ENCODE measurements at regions of chr16 and their contacts with region 1.

Region 1: GRCh38 chr16:66947302-66948065 is 12.2 kb downstream of the CES2 start:
- DNase-seq: peak; percentile 64 to 86 (median 80)
- ATAC-seq: peak; percentile 97
- H3K4me3 ChIP-seq: peak overlapping the region; percentile 45
- H3K4me3 Mint-ChIP-seq: peak overlapping the region; percentile 83 to 95 (median 92)
- H3K27ac ChIP-seq: peak overlapping the region; percentile 26
- H3K27ac Mint-ChIP-seq: peak overlapping the region in 3 of 9 donors; percentile 13 to 50 (median 29)
- H3K4me1 ChIP-seq: peaks cover 0 to 4% of the 10 kb centered on the region in 2 donors
- H3K4me1 Mint-ChIP-seq: peaks cover 13 to 24% (median 18%) of the 10 kb centered on the region in 7 donors
- H3K27me3 ChIP-seq: no peaks in the 10 kb centered on the region
- H3K27me3 Mint-ChIP-seq: peaks cover 23 to 39% (median 32%) of the 10 kb centered on the region in 5 donors

Region 2: GRCh38 chr16:66844342-66845079 is 103.0 kb before region 1 on chr16 and contains the start of gene CA7:
- CTCF ChIA-PET with region 1: no interaction called
- POLR2A ChIA-PET with region 1: no interaction called
- intact Hi-C with region 1: no loop called
- DNase-seq: no peak
- ATAC-seq: peak; percentile 24
- H3K4me3 ChIP-seq: no peak within 1 kb of the TSS
- H3K4me3 Mint-ChIP-seq: peak within 1 kb of the TSS; percentile 36 to 82 (median 68)
- H3K27ac ChIP-seq: no peak within 1 kb of the TSS
- H3K27ac Mint-ChIP-seq: peak within 1 kb of the TSS in 2 of 9 donors; percentile 45 to 76
- H3K4me1 ChIP-seq: peaks cover 0 to 4% of the 10 kb centered on the region in 2 donors
- H3K4me1 Mint-ChIP-seq: peaks cover 0 to 21% (median 5%) of the 10 kb centered on the region in 7 donors
- H3K27me3 ChIP-seq: no peaks in the 10 kb centered on the region
- H3K27me3 Mint-ChIP-seq: peaks cover 35 to 53% (median 38%) of the 10 kb centered on the region in 5 donors
- total RNA-seq, gene CA7: not detected

Region 3: GRCh38 chr16:66894948-66895688 is 52.4 kb before region 1 on chr16:
- CTCF ChIA-PET with region 1: no interaction called
- POLR2A ChIA-PET with region 1: no interaction called
- intact Hi-C with region 1: loop called in 1 of 2 experiments (anchors 5 kb)
- DNase-seq: peak; percentile 22 to 63 (median 51)
- ATAC-seq: peak; percentile 90
- H3K4me3 ChIP-seq: no peak overlapping the region
- H3K4me3 Mint-ChIP-seq: no peak overlapping the region
- H3K27ac ChIP-seq: no peak overlapping the region
- H3K27ac Mint-ChIP-seq: peak overlapping the region in 1 of 9 donors; percentile 71
- H3K4me1 ChIP-seq: peaks cover 0 to 3% of the 10 kb centered on the region in 2 donors
- H3K4me1 Mint-ChIP-seq: peaks cover 0 to 28% (median 12%) of the 10 kb centered on the region in 7 donors
- H3K27me3 ChIP-seq: no peaks in the 10 kb centered on the region
- H3K27me3 Mint-ChIP-seq: no peaks in the 10 kb centered on the region

Region 4: DNA sequence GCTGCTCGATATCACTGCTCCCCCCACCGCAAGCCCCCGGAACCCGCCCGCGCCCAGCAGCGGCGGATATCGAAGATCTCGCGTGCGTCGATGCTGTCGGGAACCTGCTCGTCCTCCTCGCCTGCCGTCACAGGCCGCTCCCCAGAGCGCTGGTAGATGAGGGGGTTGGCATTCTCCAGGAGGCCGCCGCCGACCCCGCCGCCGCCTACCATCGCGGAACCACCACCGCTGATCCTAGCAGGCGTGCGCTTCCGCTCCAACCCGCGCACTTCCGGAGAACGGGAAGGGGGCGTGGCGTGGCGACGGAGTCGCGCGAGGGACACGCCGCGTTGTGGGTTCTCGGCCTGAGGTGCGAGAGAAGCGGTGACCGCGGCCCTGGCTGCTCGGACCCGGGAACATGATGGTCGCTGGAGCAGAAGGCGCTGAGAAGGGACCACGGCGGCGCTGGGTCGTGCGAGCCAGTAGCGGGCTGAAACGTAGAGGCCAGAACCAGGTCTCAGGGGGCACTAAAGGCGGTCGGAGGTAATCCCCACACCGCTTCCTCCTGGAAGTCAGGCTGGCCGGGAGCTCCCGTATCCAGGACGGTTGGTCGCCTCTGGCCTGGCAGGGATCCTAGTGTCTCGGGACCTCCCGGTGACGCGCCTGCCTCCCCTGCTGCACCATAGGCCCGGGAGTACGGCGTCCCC is 13.2 kb before region 1 on chr16 and contains the start of gene CIAO2B:
- CTCF ChIA-PET with region 1: interaction called, 3 read pairs
- POLR2A ChIA-PET with region 1: interaction called, 3 read pairs
- intact Hi-C with region 1: loop called in 1 of 2 experiments (anchors 1 kb)
- DNase-seq: peak; percentile 86 to 95 (median 91)
- ATAC-seq: peak; percentile 93
- H3K4me3 ChIP-seq: peak within 1 kb of the TSS; percentile 96
- H3K4me3 Mint-ChIP-seq: peak within 1 kb of the TSS; percentile 91 to 99 (median 98)
- H3K27ac ChIP-seq: peak within 1 kb of the TSS; percentile 97
- H3K27ac Mint-ChIP-seq: peak within 1 kb of the TSS; percentile 96 to 99 (median 98)
- H3K4me1 ChIP-seq: peaks cover 24 to 35% of the 10 kb centered on the region in 2 donors
- H3K4me1 Mint-ChIP-seq: peaks cover 38 to 63% (median 54%) of the 10 kb centered on the region in 7 donors
- H3K27me3 ChIP-seq: no peaks in the 10 kb centered on the region
- H3K27me3 Mint-ChIP-seq: no peaks in the 10 kb centered on the region
- total RNA-seq, gene CIAO2B: 47.0 to 116 (median 58.5) TPM

Region 5: DNA sequence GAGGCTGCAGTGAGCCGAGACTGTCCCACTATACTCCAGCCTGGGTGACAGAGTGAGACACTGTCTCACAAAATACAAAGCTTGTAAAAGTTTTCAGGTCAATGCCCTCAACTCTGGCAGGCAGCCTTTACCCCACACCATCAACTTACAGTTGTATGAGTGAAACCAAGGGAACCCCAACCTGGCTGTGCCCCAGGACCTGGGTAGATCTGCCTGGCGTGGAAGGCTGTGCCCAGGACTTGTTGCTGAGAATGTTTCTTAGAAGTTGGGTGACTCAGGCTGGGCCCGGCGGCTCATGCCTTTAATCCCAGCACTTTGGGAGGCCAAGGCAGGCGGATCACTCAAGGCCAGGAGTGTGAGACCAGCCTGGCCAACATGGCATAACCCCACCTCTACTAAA is 21.4 kb after region 1 on chr16:
- CTCF ChIA-PET with region 1: no interaction called
- POLR2A ChIA-PET with region 1: no interaction called
- intact Hi-C with region 1: no loop called
- DNase-seq: no peak
- ATAC-seq: no peak
- H3K4me3 ChIP-seq: no peak overlapping the region
- H3K4me3 Mint-ChIP-seq: no peak overlapping the region
- H3K27ac ChIP-seq: no peak overlapping the region
- H3K27ac Mint-ChIP-seq: no peak overlapping the region
- H3K4me1 ChIP-seq: no peaks in the 10 kb centered on the region
- H3K4me1 Mint-ChIP-seq: peaks cover 0 to 3% (median 0%) of the 10 kb centered on the region in 7 donors
- H3K27me3 ChIP-seq: no peaks in the 10 kb centered on the region
- H3K27me3 Mint-ChIP-seq: peaks cover 0 to 5% (median 0%) of the 10 kb centered on the region in 5 donors

Region 6: DNA sequence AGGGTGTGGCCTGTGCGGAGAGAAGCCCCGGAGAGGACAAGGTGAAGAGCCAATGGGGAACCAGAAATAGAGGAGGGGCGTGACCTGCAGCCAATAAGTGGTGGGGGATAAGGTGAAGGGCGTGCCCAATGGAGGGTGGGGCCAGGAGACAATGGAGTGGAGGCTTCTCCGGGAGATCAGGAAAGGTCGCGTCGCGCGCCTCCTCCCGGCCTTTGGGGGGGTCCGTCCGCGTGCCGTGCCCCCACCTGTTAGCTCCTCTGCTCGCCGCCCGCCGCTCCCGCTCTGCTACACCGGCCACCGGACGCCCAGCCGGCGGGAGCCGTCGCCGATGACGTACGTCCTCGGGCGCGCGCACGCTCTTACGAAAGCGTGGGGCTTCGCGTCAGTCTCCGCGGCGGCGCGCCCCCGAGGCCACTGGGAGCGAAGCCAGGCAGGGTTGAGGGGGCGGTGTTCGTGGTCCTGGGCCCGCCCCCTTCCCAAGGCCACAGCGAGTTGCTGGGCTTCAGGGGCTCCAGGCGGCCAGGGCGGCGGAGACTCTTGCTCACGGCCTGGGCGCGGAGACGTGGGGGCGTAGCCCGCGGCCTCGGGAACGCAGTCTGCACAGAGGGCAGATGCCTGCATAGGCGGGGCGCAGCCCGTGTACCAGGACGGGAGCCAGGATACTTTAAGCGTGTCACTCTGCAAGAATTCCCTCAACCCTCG is 236.3 kb after region 1 on chr16 and contains the start of gene MATCAP1:
- CTCF ChIA-PET with region 1: interaction called, 3 read pairs
- POLR2A ChIA-PET with region 1: no interaction called
- intact Hi-C with region 1: loop called in 1 of 2 experiments (anchors 1 kb)
- DNase-seq: peak; percentile 90 to 98 (median 96)
- ATAC-seq: peak; percentile 97
- H3K4me3 ChIP-seq: peak within 1 kb of the TSS; percentile 79
- H3K4me3 Mint-ChIP-seq: peak within 1 kb of the TSS in 5 of 10 donors; percentile 48 to 91 (median 86)
- H3K27ac ChIP-seq: peak within 1 kb of the TSS; percentile 97
- H3K27ac Mint-ChIP-seq: peak within 1 kb of the TSS in 2 of 9 donors; percentile 58 to 67
- H3K4me1 ChIP-seq: peaks cover 12 to 15% of the 10 kb centered on the region in 2 donors
- H3K4me1 Mint-ChIP-seq: peaks cover 8 to 24% (median 13%) of the 10 kb centered on the region in 7 donors
- H3K27me3 ChIP-seq: no peaks in the 10 kb centered on the region
- H3K27me3 Mint-ChIP-seq: peaks cover 4 to 15% (median 4%) of the 10 kb centered on the region in 5 donors
- total RNA-seq, gene MATCAP1: 4.3 to 88.1 (median 11.0) TPM